Calu3 (cell line): ENCODE measurements at regions of chr13 and their contacts with region 1.

Region 1: GRCh38 chr13:40789275-40790133 is at the start of gene SLC25A15:
- DNase-seq: peak; percentile 89
- H3K4me3 Mint-ChIP-seq: peak within 1 kb of the TSS; percentile 64
- H3K27ac Mint-ChIP-seq: peak within 1 kb of the TSS; percentile 44
- H3K4me1 Mint-ChIP-seq: peaks cover 16% of the 10 kb centered on the region
- H3K27me3 Mint-ChIP-seq: no peaks in the 10 kb centered on the region
- CTCF ChIP-seq: peak; percentile 15
- total RNA-seq, gene SLC25A15: 15.3 and 18.3 TPM in 2 replicates

Region 2: DNA sequence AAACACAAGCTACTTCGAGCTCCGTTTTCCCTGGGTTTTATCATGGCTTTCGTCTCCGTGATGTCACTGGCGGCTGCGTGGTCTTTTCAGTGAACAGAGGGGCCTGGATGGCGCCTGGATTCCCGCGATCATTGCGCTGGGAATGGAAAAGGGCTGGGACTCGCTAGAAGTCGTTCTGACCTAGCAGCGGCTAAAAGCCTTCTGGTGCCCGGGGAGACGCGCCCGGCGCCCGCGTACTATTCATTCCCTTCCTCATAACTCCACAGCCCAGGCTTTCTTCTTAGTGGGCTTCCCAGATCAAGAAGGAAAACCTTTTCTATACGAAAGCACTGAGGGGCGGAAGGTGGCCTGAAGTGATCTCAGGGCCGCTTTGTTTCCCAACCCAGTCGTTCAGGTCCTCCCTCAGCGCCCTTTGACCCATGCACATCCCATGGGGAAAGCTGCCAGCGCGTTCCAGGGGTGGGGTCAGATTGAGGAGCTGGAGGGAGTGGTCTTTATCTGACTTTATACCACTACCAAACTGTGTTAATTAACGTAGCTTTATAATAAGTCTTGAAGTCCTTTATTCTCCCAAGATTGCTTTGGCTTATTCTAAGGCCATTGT is 133.0 kb after region 1 on chr13:
- CTCF ChIA-PET with region 1: interaction called, 9 read pairs
- intact Hi-C with region 1: loop called (anchors 1 kb)
- DNase-seq: no peak
- H3K4me3 Mint-ChIP-seq: peak overlapping the region; percentile 85
- H3K27ac Mint-ChIP-seq: no peak overlapping the region
- H3K4me1 Mint-ChIP-seq: peaks cover 10% of the 10 kb centered on the region
- H3K27me3 Mint-ChIP-seq: no peaks in the 10 kb centered on the region
- CTCF ChIP-seq: no peak

Region 3: DNA sequence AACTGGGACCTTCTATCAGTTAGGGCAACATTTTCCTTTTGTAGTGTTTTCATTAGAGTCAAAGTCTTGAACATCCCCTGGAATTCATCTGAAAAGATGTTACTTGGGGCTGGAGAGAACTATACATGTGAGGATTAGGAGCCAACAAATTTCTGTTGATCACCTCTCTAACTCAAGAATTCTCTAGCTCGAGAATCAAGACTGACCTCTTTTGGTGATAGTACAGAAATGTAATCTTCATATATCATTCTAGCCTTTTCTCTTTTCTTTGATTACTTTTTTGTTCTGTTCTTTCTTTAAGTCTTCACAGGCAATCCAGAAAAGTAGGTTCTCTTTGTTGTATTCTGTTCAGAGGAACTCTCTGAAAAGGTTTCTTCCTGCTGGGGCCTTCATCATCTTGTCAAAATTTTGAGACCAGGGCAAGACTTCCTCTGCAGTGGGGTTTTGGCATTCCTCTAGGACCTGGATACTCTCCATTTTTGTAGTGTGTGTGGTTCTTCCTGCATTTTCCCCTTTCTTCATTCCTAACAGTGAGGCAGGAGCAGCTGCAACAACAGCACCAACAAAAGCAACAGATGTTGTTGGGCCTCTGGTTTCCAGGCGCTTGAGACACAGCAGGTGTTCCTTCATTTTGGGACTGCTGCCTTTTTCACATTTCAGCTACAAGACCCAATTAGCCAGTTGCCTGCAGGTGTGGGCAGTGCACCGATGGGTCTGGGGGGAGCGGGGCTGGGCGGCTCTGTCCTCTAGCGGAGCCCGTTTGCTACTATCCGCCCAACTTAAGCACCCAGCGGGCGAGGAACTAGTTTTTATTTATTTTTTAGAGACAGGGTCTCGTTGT is 203.4 kb after region 1 on chr13:
- CTCF ChIA-PET with region 1: no interaction called
- intact Hi-C with region 1: loop called (anchors 5 kb)
- DNase-seq: no peak
- H3K4me3 Mint-ChIP-seq: peak overlapping the region; percentile 52
- H3K27ac Mint-ChIP-seq: peak overlapping the region; percentile 56
- H3K4me1 Mint-ChIP-seq: peaks cover 34% of the 10 kb centered on the region
- H3K27me3 Mint-ChIP-seq: no peaks in the 10 kb centered on the region
- CTCF ChIP-seq: no peak